Activated CD4-positive, alpha-beta T cell treated with anti-CD3 and anti-CD28 coated beads, Interleukin-2, amount 10 ng/mL, durations not matched to agents 24 days and 14 days (primary cell): ENCODE measurements at regions of chr10 and their contacts with region 1.

Region 1: DNA sequence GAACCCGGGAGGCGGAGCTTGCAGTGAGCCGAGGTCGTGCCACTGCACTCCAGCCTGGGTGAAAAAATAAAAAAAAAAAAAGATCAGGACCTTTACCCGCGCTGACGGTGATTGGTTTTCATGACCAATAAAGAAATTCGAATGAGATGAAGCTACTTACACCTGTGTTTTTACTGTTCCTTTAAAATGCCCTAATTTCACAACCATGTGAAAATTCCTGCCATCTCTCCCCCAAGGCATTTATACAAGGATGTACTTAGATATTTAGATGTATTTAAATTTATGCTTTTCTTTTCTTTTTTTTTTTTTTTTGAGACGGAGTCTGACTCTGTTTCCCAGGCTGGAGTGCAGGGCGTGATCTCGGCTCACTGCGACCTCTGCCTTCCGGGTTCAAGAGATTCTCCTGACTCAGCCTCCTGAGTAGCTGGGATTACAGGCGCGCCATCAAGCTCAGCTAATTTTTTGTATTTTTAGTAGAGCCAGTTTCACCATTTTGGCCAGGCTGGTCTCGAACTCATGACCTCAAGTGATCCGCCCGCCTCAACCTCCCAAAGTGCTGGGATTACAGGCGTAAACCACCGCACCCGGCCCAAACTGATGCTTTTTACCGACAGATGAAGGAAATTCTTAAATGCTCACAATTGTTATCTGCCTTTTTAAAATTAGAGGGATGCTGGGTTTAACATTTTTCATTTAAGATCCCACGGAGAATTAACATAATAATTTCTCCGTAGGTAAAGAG is 3.1 kb upstream of the PHYH start:
- DNase-seq: no peak
- H3K4me3 Mint-ChIP-seq: peak overlapping the region; percentile 82
- H3K27ac Mint-ChIP-seq: peak overlapping the region; percentile 98
- H3K4me1 Mint-ChIP-seq: peaks cover 22% of the 10 kb centered on the region
- H3K27me3 Mint-ChIP-seq: no peaks in the 10 kb centered on the region

Region 2: GRCh38 chr10:13099666-13100348 is 203.2 kb before region 1 on chr10 and contains the start of gene OPTN:
- intact Hi-C with region 1: loop called (anchors 2 kb)
- DNase-seq: peak; percentile 93
- H3K4me3 Mint-ChIP-seq: peak within 1 kb of the TSS; percentile 92
- H3K27ac Mint-ChIP-seq: peak within 1 kb of the TSS; percentile 92
- H3K4me1 Mint-ChIP-seq: peaks cover 46% of the 10 kb centered on the region
- H3K27me3 Mint-ChIP-seq: no peaks in the 10 kb centered on the region
- total RNA-seq, gene OPTN: 39.5 and 43.6 TPM in 2 replicates

Region 3: GRCh38 chr10:13348216-13349017 is 45.4 kb after region 1 on chr10 and contains the start of gene SEPHS1:
- intact Hi-C with region 1: loop called (anchors 1 kb)
- DNase-seq: peak; percentile 94
- H3K4me3 Mint-ChIP-seq: peak within 1 kb of the TSS; percentile 87
- H3K27ac Mint-ChIP-seq: peak within 1 kb of the TSS; percentile 95
- H3K4me1 Mint-ChIP-seq: peaks cover 49% of the 10 kb centered on the region
- H3K27me3 Mint-ChIP-seq: no peaks in the 10 kb centered on the region
- total RNA-seq, gene SEPHS1: 59.9 and 64.2 TPM in 2 replicates

Region 4: GRCh38 chr10:13732465-13732881 is 429.5 kb after region 1 on chr10:
- intact Hi-C with region 1: no loop called
- DNase-seq: no peak
- H3K4me3 Mint-ChIP-seq: no peak overlapping the region
- H3K27ac Mint-ChIP-seq: no peak overlapping the region
- H3K4me1 Mint-ChIP-seq: no peaks in the 10 kb centered on the region
- H3K27me3 Mint-ChIP-seq: peaks cover 4% of the 10 kb centered on the region